HEK293T (cell line): ENCODE measurements at regions of chr12 and their contacts with region 1.

Region 1: DNA sequence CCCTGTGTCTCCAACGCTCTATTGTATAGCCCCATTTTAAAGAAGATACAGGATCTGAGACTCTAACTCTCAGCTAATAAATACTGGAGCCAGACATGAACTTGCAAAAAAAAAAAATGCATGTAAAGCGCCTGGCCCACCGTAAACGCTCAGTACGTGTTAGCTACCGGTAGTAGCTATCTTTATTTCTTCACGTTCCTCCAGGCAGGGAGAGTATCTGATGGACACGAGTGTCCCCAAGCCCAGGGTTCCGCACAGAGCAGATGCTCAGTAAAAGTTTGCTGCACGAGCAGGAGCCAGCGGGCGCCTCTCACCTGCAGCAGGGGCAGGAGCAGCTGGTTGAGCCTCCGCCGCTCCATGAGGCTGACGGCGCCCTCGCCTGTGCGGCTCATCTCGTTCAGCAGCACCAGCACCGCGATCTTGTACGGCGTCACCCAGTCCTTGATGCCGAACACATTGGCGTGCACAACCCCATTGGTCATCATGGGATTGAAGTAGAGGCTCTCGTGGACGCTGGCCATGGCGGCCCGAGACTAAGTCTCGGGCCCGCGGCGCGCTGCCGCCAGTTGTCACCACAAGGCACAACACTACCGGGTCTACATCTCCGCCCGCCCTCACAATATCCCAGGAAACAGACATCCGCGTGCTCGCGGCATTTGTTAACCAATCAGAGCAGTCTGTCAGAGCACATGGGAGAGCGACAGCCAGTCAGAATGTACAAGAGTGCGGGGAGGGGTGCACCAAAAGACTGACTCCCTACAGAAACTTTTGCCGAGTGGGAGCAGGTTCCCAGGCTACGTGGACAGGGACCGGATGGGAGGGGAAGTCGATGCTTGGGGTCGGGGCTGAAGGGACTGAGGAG is at the start of gene ANAPC5:
- DNase-seq: peak; percentile 94

Region 2: DNA sequence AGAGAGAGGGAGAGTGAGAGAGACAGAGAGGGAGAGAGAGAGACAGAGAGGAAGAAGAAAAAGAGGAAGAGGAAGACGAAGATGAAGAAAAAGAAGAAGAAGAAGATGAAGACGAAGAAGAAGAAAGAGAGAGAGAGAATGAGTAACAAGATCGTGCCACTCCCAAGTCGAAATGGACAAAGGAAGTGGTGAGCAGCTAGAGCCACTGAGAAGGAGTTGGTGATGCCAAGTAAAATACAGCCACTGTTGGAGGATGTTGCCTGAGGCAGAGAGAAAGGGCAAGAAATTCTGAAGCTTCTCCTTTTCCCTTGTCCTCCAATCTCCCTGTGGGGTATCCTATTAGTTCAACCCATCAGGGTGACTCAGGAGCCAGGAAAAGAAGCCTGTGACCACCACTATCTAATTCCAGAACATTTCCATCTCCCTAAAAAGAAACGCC is 12.7 kb after region 1 on chr12:
- CTCF ChIA-PET with region 1: no interaction called
- POLR2A ChIA-PET with region 1: interaction called, 26 read pairs
- DNase-seq: no peak

Region 3: GRCh38 chr12:121399391-121400331 is 47.6 kb after region 1 on chr12 and contains the start of gene RNF34:
- CTCF ChIA-PET with region 1: no interaction called
- POLR2A ChIA-PET with region 1: interaction called, 36 read pairs
- DNase-seq: peak; percentile 98

Region 4: DNA sequence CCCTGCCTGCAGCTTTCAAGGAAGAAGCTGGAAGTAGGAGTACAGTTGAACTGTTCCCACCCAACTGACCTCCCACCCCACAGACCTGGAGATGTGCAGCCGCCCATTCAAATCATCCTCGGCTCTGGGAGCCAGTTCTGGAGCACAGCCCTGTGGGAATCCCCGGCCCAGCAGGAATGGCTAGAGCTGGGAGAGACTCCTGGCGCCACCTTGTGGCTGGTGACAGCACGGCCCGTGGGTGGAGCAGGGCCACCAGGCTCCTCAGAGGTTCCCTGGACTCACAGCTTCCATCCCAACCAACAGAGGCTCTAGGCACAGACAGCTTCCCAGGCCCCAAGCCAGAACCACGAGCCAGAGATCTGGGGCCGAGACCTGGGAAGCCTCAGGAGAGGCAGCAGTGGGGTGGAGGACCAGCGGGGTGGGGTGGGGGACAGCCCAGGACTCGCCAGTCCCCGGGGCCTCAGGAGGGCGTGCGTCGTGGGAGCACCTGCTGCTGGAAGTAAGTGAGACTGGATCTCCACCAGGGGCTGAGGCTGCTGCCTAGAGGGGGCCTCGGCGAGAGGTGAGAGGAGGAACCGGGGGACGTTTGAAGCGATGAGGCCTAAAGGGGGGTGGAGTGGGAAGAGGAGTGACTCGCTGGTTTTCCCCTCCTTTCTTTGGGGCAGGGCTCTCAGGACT is 91.3 kb after region 1 on chr12:
- CTCF ChIA-PET with region 1: no interaction called
- POLR2A ChIA-PET with region 1: interaction called, 11 read pairs
- DNase-seq: peak; percentile 94